Activated CD4-positive, alpha-beta memory T cell treated with anti-CD3 and anti-CD28 coated beads for 36 hours (primary cell): ENCODE measurements at regions of chrX and their contacts with region 1.

Region 1: GRCh38 chrX:45843518-45843917 is 642.8 kb upstream of the DIPK2B start:
- DNase-seq: no peak
- H3K4me3 Mint-ChIP-seq: no peak overlapping the region
- H3K27ac Mint-ChIP-seq: peak overlapping the region; percentile 86
- H3K4me1 Mint-ChIP-seq: peaks cover 49% of the 10 kb centered on the region
- H3K27me3 Mint-ChIP-seq: no peaks in the 10 kb centered on the region

Region 2: GRCh38 chrX:45824471-45824870 is 19.0 kb before region 1 on chrX:
- CTCF ChIA-PET with region 1: interaction called, 4 read pairs
- POLR2A ChIA-PET with region 1: no interaction called
- intact Hi-C with region 1: loop called (anchors 2 kb)
- DNase-seq: peak; percentile 77
- H3K4me3 Mint-ChIP-seq: no peak overlapping the region
- H3K27ac Mint-ChIP-seq: peak overlapping the region; percentile 89
- H3K4me1 Mint-ChIP-seq: peaks cover 57% of the 10 kb centered on the region
- H3K27me3 Mint-ChIP-seq: no peaks in the 10 kb centered on the region

Region 3: DNA sequence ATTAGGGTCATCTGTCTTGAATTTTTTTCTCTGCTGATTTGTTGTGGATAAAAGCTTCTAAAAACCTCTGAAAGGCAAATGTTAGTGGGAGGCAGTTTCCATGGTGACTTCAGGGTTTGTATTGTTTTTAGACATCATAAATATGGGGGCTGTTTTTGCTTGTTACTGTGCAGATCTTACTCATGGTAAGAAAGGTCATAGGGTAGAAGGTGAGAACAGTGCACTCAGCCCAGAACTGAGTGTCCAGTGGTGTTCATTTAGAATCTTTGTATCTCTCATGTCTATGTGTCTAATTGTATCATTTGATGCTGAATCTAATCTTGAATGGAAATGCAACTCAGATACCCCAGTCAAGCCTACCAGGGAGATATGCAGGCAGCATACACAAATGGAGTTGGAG is 91.9 kb after region 1 on chrX:
- CTCF ChIA-PET with region 1: no interaction called
- POLR2A ChIA-PET with region 1: no interaction called
- intact Hi-C with region 1: no loop called
- DNase-seq: no peak
- H3K4me3 Mint-ChIP-seq: no peak overlapping the region
- H3K27ac Mint-ChIP-seq: no peak overlapping the region
- H3K4me1 Mint-ChIP-seq: peaks cover 7% of the 10 kb centered on the region
- H3K27me3 Mint-ChIP-seq: no peaks in the 10 kb centered on the region